ENCODE measurements at regions of chr14 and their contacts with region 1.

Region 1: GRCh38 chr14:75497191-75497590 is 25.1 kb upstream of the BATF start:
- DNase-seq: no peak
- ATAC-seq: no peak
- H3K4me3 ChIP-seq: no peak overlapping the region
- H3K27ac ChIP-seq: no peak overlapping the region
- H3K4me1 ChIP-seq: peaks cover 0 to 23% (median 0%) of the 10 kb centered on the region in 9 donors
- H3K27me3 ChIP-seq: no peaks in the 10 kb centered on the region
- CTCF ChIP-seq: no peak

Region 2: DNA sequence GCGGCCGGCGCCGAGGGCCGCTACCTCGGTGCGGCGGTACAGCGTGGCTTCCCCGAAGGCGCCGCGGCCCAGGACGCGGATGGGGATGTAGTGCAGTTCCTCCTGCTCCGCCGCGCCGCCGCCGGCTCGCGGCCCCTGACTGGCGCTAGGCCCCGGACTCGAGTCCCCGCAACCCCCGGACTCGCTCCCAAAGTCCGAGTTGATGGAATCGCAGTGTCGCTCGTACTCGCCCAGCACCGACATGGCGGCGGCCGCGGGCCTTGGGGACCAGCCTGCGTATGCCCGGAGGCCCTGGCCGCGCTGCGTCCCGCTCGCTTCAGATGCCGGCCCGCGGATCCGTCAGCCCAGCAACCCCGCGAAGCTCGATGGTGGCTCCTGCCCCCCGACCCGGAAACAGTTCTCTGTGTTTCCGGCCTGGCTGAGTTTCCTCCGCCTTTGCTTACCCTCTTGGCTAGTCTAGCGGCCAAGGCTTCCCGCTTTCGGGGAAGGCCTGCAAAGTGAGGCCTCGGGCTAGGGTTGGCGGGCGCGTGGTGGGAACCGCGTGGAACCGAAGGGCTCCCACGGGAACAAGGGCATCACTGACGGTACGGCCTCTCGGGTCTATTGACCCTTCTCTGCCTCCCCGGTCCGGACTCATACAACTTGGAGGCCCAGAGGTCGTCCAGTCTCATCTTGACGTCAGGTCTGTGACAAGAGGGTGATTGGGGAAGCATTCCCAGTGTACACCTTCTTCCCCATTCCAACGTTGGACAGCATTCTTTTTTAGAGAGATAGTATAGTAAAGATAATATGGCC is 370.3 kb before region 1 on chr14 and contains the start of gene NEK9:
- intact Hi-C with region 1: loop called in 2 of 10 experiments (anchors 5 to 10 kb)
- DNase-seq: peak; percentile 91 to 94
- ATAC-seq: peak; percentile 95 to 98 (median 96)
- H3K4me3 ChIP-seq: peak within 1 kb of the TSS; percentile 63 to 96 (median 84)
- H3K27ac ChIP-seq: peak within 1 kb of the TSS; percentile 90 to 99 (median 96)
- H3K4me1 ChIP-seq: peaks cover 0 to 54% (median 41%) of the 10 kb centered on the region in 9 donors
- H3K27me3 ChIP-seq: no peaks in the 10 kb centered on the region
- CTCF ChIP-seq: peak in 1 of 9 donors; percentile 13
- total RNA-seq, gene NEK9: 97.8 to 138 (median 115) TPM

Region 3: GRCh38 chr14:75132382-75133086 is 364.7 kb before region 1 on chr14:
- intact Hi-C with region 1: loop called in 2 of 10 experiments (anchors 5 to 10 kb)
- DNase-seq: peak in 1 of 2 donors; percentile 73
- ATAC-seq: peak; percentile 50 to 83 (median 76)
- H3K4me3 ChIP-seq: no peak overlapping the region
- H3K27ac ChIP-seq: peak overlapping the region in 4 of 10 donors; percentile 6 to 67 (median 26)
- H3K4me1 ChIP-seq: peaks cover 0 to 22% (median 15%) of the 10 kb centered on the region in 9 donors
- H3K27me3 ChIP-seq: no peaks in the 10 kb centered on the region
- CTCF ChIP-seq: peak; percentile 58 to 82 (median 74)

Region 4: GRCh38 chr14:75141967-75142366 is 355.2 kb before region 1 on chr14:
- intact Hi-C with region 1: loop called in 2 of 10 experiments (anchors 5 to 10 kb)
- DNase-seq: no peak
- ATAC-seq: peak in 1 of 8 donors; percentile 53
- H3K4me3 ChIP-seq: no peak overlapping the region
- H3K27ac ChIP-seq: peak overlapping the region in 3 of 10 donors; percentile 3 to 56 (median 5)
- H3K4me1 ChIP-seq: peaks cover 2 to 90% (median 54%) of the 10 kb centered on the region in 9 donors
- H3K27me3 ChIP-seq: no peaks in the 10 kb centered on the region
- CTCF ChIP-seq: peak in 8 of 9 donors; percentile 5 to 58 (median 48)

Region 5: DNA sequence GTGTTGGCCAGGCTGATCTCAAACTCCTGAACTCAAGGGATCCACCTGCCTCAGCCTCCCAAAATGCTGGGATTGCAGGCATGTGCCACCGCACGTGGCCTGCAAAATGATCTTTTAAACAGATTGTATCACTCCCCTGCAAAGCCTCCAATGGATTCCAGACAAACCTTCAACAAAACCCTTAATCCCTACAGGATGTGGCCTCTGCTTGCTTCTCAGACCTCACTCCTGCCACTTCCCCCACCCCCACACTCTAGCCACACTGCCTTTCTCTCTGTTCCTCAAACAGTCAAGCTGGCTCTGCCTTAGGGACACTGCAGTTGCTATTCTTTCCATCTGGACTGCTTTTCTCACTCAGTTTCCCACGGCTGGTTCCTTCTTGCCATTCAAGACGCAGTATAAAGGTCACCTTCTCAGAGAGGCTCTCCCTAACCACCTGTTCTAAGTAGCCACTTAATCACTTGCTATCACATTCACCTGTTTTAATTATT is 273.5 kb before region 1 on chr14:
- intact Hi-C with region 1: loop called in 1 of 10 experiments (anchors 10 kb)
- DNase-seq: peak in 1 of 2 donors; percentile 64
- ATAC-seq: peak in 7 of 8 donors; percentile 60 to 79 (median 68)
- H3K4me3 ChIP-seq: no peak overlapping the region
- H3K27ac ChIP-seq: no peak overlapping the region
- H3K4me1 ChIP-seq: peaks cover 0 to 51% (median 0%) of the 10 kb centered on the region in 9 donors
- H3K27me3 ChIP-seq: no peaks in the 10 kb centered on the region
- CTCF ChIP-seq: no peak

Region 6: DNA sequence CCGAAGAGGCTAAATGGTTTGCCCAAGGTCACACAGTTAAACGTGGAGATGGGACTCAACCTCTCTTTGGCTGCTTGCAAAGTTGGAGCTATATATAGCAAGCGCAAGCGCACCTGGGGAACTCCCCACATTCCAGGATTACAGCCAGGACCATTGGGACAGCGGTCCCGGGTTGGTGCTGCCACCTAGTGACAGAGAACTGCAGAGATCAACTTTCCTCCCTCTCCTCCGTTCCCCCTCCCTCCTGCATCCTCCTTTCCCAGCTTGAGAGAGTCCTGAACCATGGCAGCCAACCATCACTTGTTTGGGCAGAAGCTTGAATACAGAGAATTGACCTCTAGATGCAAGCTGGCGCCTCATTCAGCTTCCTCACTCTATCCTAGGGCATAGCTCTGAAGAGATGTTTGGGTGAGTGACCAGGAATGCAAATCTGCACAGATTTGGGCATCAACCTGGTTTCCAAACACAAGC is 63.8 kb after region 1 on chr14:
- intact Hi-C with region 1: loop called in 1 of 10 experiments (anchors 5 kb)
- DNase-seq: peak; percentile 56 to 70
- ATAC-seq: peak; percentile 80 to 90 (median 85)
- H3K4me3 ChIP-seq: no peak overlapping the region
- H3K27ac ChIP-seq: no peak overlapping the region
- H3K4me1 ChIP-seq: peaks cover 0 to 20% (median 2%) of the 10 kb centered on the region in 9 donors
- H3K27me3 ChIP-seq: peaks cover 0 to 2% (median 0%) of the 10 kb centered on the region in 7 donors
- CTCF ChIP-seq: peak; percentile 43 to 93 (median 76)